HEK293 (cell line): ENCODE measurements at regions of chr12 and their contacts with region 1.

Region 1: GRCh38 chr12:32399337-32400113 is at the start of gene FGD4:
- H3K4me3 ChIP-seq: peak within 1 kb of the TSS; percentile 84
- H3K27ac ChIP-seq: peak within 1 kb of the TSS; percentile 75
- H3K4me1 ChIP-seq: peaks cover 14% of the 10 kb centered on the region
- CTCF ChIP-seq: peak; percentile 100

Region 2: GRCh38 chr12:32419520-32419960 is 20.0 kb after region 1 on chr12:
- CTCF ChIA-PET with region 1: interaction called, 3 read pairs
- POLR2A ChIA-PET with region 1: interaction called, 10 read pairs
- H3K4me3 ChIP-seq: no peak overlapping the region
- H3K27ac ChIP-seq: no peak overlapping the region
- H3K4me1 ChIP-seq: peaks cover 4% of the 10 kb centered on the region
- CTCF ChIP-seq: no peak

Region 3: GRCh38 chr12:32443483-32443882 is 44.0 kb after region 1 on chr12:
- CTCF ChIA-PET with region 1: no interaction called
- POLR2A ChIA-PET with region 1: interaction called, 10 read pairs
- H3K4me3 ChIP-seq: no peak overlapping the region
- H3K27ac ChIP-seq: no peak overlapping the region
- H3K4me1 ChIP-seq: peaks cover 15% of the 10 kb centered on the region
- CTCF ChIP-seq: no peak